WTC11 (cell line): ENCODE measurements at regions of chr17 and their contacts with region 1.

Region 1: DNA sequence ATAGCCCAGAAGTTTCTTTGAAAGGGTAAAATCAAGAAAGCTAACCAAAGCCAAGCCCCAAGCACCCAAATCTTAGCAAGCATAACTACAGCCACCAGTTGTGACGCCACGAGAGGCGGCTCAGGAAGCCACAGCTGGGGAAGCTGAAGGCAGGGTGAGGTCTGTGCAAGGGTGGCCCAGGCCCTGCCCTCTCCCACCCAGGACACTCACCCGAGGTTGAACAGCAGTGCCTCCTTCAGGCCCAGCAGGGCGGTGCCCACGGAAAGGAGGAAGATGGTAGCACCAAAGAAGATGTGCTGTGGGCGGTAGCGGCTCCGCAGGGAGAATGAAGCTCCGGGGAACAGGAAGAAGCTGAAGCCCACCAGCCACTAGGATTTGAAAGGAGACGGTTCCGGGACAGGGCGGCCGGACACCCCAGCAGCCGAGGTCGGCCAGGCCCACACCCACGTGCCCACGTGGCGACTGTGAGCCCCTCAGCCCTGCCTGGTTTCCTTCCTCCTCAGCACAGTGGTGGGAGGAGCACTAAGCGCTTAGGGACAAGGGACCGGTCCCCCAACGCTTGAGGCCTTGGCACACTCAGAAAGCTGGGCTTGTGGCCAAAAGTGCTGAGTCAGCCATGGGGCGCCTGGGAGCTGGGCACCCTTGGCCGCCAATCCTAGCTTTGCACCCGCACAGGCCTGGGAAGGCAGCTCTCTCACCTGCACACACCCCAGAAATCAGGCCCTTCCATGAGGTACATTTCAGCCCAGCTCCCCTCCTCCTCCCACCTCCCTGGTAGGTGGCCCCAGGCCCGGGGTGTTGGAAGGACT is 11.0 kb downstream of the CYB561 start:
- DNase-seq: peak; percentile 43
- ATAC-seq: no peak
- H3K4me3 Mint-ChIP-seq: no peak overlapping the region
- H3K27ac Mint-ChIP-seq: peak overlapping the region; percentile 36; the same call in 1 of the 2 replicates
- H3K4me1 Mint-ChIP-seq: peaks cover 25% of the 10 kb centered on the region
- H3K27me3 Mint-ChIP-seq: no peaks in the 10 kb centered on the region
- CTCF ChIP-seq: peak; percentile 19; the same call in 1 of the 2 replicates

Region 2: DNA sequence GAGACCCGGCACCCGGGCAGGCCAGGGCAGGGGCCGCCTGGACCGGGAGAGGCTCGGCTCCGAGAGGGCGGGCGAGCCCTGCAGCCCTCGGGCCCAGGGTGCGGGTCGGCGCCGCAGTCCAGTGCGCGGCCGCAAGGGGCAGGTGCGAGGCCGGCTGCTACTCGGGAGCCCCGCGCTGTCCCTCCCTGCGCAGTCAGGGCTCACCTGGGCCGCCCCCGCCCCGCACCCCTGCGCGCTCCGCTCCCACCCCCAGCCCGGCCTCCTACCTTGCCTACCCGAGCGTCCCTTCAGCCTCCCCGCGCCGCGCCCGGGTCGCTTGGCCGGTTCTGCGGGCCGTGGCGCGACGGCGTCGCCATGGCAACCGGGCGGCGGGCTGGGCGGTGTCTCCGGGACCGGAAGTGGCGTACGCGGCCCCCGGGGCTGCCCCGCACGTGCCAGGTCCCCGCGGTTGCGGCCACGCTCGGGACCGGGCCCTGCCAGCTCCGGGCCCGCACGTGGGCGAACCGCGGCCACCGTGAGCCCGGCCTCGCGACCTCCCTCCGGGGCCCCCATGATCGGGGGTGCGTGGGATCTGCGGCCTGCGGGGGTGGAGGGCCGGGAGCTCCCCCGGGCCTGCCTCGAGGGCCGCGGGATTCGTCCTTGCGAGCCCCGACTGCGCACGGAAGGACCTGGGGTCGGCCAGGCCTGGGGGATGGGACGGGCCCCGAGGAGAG is 11.1 kb after region 1 on chr17 and contains the start of gene CYB561:
- CTCF ChIA-PET with region 1: interaction called, 54 read pairs
- POLR2A ChIA-PET with region 1: interaction called, 4 read pairs
- DNase-seq: peak; percentile 76
- ATAC-seq: peak; percentile 80
- H3K4me3 Mint-ChIP-seq: peak within 1 kb of the TSS; percentile 64
- H3K27ac Mint-ChIP-seq: peak within 1 kb of the TSS; percentile 74; the same call in 1 of the 2 replicates
- H3K4me1 Mint-ChIP-seq: peaks cover 32% of the 10 kb centered on the region
- H3K27me3 Mint-ChIP-seq: peaks cover 5% of the 10 kb centered on the region
- CTCF ChIP-seq: peak; percentile 62
- total RNA-seq, gene CYB561: 27.0 to 35.1 TPM (median 28.7 TPM) in 3 replicates

Region 3: DNA sequence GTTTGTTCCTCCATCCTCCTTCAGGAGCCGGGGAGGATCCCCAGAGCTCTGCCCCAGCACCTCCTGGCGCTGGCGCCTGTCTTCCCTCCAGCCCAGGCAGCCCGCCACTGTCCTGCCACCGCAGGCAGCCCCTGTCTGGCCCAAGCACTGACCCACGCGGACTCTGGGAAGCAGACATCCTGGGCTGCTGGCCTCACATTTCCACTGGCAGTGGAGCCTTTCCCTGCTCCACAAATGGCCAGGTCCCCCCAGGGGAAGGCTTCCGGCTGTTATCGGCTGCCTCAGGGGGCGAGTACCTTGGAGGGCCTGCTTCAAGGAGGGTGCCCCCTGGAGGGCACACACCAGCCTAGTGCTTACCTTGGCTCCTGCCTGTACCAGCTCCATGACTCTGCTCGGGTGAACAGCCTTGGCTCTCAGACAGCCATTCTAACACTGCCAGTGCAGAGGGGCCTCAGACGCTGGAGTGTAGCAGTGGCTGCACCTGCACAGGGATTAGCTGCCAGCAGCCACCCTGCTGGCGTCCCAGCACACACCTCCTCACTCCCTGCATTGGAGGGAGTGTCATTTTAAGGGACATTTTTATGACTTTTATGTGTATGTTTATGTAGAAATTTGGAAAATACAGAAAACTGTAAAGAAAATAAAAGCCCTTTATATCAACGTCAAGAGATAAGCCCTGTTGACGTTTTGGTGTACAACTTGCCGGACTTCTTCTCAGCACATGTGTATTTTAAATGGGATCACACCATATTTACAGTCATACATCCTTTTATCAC is 62.8 kb after region 1 on chr17:
- CTCF ChIA-PET with region 1: interaction called, 27 read pairs
- POLR2A ChIA-PET with region 1: no interaction called
- DNase-seq: peak; percentile 72
- ATAC-seq: peak; percentile 94
- H3K4me3 Mint-ChIP-seq: no peak overlapping the region
- H3K27ac Mint-ChIP-seq: 0 out of 2 replicates have a peak overlapping the region, but pooled peaks have one; percentile 36
- H3K4me1 Mint-ChIP-seq: peaks cover 8% of the 10 kb centered on the region
- H3K27me3 Mint-ChIP-seq: no peaks in the 10 kb centered on the region; the same call in 1 of the 2 replicates
- CTCF ChIP-seq: no peak

Region 4: DNA sequence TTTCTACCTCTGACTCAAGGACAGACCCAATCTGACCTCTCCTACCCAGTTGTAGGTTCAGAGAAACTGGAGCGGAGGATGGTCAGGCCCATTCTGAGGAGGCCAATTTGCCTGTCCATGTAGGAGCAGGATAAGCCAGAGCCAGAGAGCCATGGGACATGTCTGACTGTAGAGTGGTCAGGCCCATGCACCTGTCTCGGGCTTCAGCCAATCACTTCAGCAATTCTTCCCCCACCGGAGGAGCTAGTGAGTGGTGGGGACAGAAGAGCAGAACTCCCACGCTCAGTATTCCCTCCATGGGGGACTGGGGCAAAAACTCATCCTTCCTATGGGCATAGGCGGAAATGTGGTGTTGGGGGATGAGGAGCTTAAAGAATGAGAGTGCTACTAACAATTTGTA is 129.5 kb after region 1 on chr17:
- CTCF ChIA-PET with region 1: interaction called, 11 read pairs
- POLR2A ChIA-PET with region 1: no interaction called
- DNase-seq: no peak
- ATAC-seq: peak; percentile 81
- H3K4me3 Mint-ChIP-seq: no peak overlapping the region
- H3K27ac Mint-ChIP-seq: peak overlapping the region; percentile 63
- H3K4me1 Mint-ChIP-seq: no peaks in the 10 kb centered on the region
- H3K27me3 Mint-ChIP-seq: no peaks in the 10 kb centered on the region
- CTCF ChIP-seq: no peak